ENCODE measurements at regions of chrX and their contacts with region 1.

Region 1: GRCh38 chrX:74550295-74550802 is 64.1 kb downstream of the RLIM start:
- DNase-seq: peak; percentile 75 to 83 (median 82)
- H3K4me3 ChIP-seq: peak overlapping the region in 1 of 2 donors; percentile 28
- H3K4me3 Mint-ChIP-seq: peak overlapping the region in 7 of 8 donors; percentile 60 to 86 (median 75)
- H3K27ac ChIP-seq: no peak overlapping the region
- H3K27ac Mint-ChIP-seq: peak overlapping the region in 5 of 7 donors; percentile 20 to 79 (median 51)
- H3K4me1 ChIP-seq: no peaks in the 10 kb centered on the region
- H3K4me1 Mint-ChIP-seq: peaks cover 1 to 4% (median 3%) of the 10 kb centered on the region in 4 donors
- H3K27me3 ChIP-seq: no peaks in the 10 kb centered on the region
- H3K27me3 Mint-ChIP-seq: peaks cover 0 to 2% of the 10 kb centered on the region in 2 donors

Region 2: GRCh38 chrX:74291964-74292807 is 258.2 kb before region 1 on chrX:
- CTCF ChIA-PET with region 1: no interaction called
- POLR2A ChIA-PET with region 1: no interaction called
- intact Hi-C with region 1: loop called (anchors 10 kb)
- DNase-seq: peak; percentile 81 to 88 (median 85)
- H3K4me3 ChIP-seq: peak overlapping the region; percentile 94 to 96
- H3K4me3 Mint-ChIP-seq: peak overlapping the region; percentile 90 to 100 (median 96)
- H3K27ac ChIP-seq: peak overlapping the region; percentile 84
- H3K27ac Mint-ChIP-seq: peak overlapping the region; percentile 94 to 98 (median 98)
- H3K4me1 ChIP-seq: peaks cover 28% of the 10 kb centered on the region
- H3K4me1 Mint-ChIP-seq: peaks cover 5 to 34% (median 13%) of the 10 kb centered on the region in 4 donors
- H3K27me3 ChIP-seq: no peaks in the 10 kb centered on the region
- H3K27me3 Mint-ChIP-seq: no peaks in the 10 kb centered on the region

Region 3: DNA sequence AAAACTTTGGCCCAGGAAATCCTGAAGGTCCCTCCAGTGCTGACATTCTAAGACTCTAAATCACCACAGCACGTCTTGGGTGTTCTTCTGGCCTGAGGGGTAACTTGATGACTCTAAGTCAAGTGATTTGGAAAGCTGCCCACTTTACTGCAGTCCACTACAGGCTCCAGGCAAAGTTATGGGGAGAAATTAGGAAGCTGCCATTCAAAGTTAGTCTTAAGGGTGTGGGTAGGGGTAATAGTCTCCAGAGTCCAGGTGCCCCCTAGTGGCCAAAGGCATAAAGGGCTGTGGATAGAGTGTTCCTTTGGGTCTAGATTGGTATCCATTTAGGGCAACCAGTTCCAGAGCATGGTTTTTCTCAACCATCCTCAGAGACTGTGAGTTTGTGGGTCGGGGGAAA is 167.7 kb before region 1 on chrX:
- CTCF ChIA-PET with region 1: interaction called, 3 read pairs
- POLR2A ChIA-PET with region 1: no interaction called
- intact Hi-C with region 1: loop called (anchors 1 kb)
- DNase-seq: peak; percentile 34 to 50 (median 45)
- H3K4me3 ChIP-seq: no peak overlapping the region
- H3K4me3 Mint-ChIP-seq: no peak overlapping the region
- H3K27ac ChIP-seq: no peak overlapping the region
- H3K27ac Mint-ChIP-seq: no peak overlapping the region
- H3K4me1 ChIP-seq: no peaks in the 10 kb centered on the region
- H3K4me1 Mint-ChIP-seq: no peaks in the 10 kb centered on the region
- H3K27me3 ChIP-seq: no peaks in the 10 kb centered on the region
- H3K27me3 Mint-ChIP-seq: peaks cover 0 to 3% of the 10 kb centered on the region in 2 donors

Region 4: DNA sequence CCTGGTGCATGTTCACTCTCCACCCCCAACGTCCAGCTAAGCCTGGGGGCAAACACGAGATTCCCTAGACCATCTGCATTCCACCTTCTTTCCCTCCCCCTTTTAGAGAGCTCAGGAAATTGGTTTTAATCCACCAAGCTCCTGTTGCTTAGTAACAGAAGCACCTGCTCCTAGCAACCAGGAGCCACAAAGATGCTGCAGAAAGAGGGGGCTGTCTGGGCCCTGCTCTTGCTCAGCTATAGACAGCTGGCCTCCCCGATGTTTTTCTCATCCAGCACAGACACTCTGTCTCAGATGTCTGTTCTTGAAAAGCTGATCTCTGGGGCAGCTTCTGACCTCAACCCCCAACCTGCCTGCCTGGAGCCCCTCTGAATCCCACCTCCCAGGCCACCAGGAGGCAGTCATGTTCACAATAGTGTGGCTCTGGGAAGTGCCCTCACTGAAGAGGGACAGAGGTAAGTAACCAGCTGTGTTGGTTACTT is 57.6 kb before region 1 on chrX:
- CTCF ChIA-PET with region 1: interaction called, 3 read pairs
- POLR2A ChIA-PET with region 1: no interaction called
- intact Hi-C with region 1: loop called (anchors 1 kb)
- DNase-seq: peak in 2 of 5 donors; percentile 6 to 7
- H3K4me3 ChIP-seq: no peak overlapping the region
- H3K4me3 Mint-ChIP-seq: no peak overlapping the region
- H3K27ac ChIP-seq: no peak overlapping the region
- H3K27ac Mint-ChIP-seq: no peak overlapping the region
- H3K4me1 ChIP-seq: no peaks in the 10 kb centered on the region
- H3K4me1 Mint-ChIP-seq: no peaks in the 10 kb centered on the region
- H3K27me3 ChIP-seq: no peaks in the 10 kb centered on the region
- H3K27me3 Mint-ChIP-seq: no peaks in the 10 kb centered on the region

Region 5: GRCh38 chrX:74614093-74614909 is 64.0 kb after region 1 on chrX and contains the start of gene RLIM:
- CTCF ChIA-PET with region 1: no interaction called
- POLR2A ChIA-PET with region 1: interaction called, 3 read pairs
- intact Hi-C with region 1: loop called (anchors 5 kb)
- DNase-seq: peak; percentile 91 to 97 (median 95)
- H3K4me3 ChIP-seq: peak within 1 kb of the TSS; percentile 68 to 73
- H3K4me3 Mint-ChIP-seq: peak within 1 kb of the TSS; percentile 97 to 100 (median 99)
- H3K27ac ChIP-seq: peak within 1 kb of the TSS; percentile 97
- H3K27ac Mint-ChIP-seq: peak within 1 kb of the TSS; percentile 99 to 100 (median 100)
- H3K4me1 ChIP-seq: peaks cover 22% of the 10 kb centered on the region
- H3K4me1 Mint-ChIP-seq: peaks cover 8 to 39% (median 21%) of the 10 kb centered on the region in 4 donors
- H3K27me3 ChIP-seq: no peaks in the 10 kb centered on the region
- H3K27me3 Mint-ChIP-seq: no peaks in the 10 kb centered on the region
- total RNA-seq, gene RLIM: 43.8 to 44.5 TPM

Measured in CD4-positive, alpha-beta memory T cell (primary cell).